Uterus (tissue), 4 donors: ENCODE measurements at regions of chr21 and their contacts with region 1.

Region 1: DNA sequence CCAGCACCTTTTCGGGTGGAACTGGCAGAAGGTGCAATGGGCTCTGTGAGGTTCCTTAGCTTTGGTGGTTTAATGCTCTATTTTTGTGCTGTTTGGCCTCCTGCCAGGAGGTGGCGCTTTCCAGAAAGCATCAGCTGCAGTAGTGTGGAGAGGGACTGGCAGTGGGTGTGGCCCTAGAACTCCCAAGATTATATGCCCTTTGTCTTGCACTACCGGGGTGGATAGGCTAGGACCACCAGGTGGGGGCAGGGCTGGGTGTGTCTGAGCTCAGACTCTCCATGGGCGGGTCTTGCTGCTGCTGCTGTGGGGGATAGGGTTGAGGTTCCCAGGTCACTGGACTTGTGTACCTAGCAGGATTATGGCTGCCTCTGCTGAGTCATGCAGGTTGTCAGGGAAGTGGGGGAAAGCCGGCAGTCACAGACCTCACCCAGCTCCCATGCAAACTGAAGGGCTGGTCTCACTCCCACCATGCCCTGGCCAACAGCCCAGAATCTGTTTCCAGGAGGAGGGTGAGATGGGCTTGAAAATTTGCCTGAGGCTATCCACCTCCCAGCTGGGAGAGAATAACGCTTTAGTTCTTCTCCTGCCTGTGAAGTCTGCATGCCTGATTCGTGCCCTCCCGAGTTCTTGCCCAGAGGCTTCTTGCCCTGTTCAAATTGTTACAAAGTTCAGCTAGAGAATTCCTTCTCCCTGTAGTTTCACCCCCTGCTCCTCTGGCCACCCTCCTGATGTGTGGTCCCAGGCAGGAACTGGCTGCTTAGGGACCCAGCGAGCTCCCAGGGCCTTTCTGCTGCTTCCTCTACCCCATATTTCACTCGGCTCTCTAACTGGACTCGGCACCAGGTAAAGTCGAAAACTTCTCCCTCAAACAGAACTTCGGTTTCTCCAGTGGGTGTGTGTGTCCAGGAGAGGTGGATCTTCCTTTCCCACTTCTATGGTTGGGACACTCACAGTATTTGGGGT is 76.5 kb upstream of the BTG3 start:
- DNase-seq: peak; percentile 85 to 90
- H3K4me3 ChIP-seq: no peak overlapping the region
- H3K27ac ChIP-seq: peak overlapping the region; percentile 79
- H3K4me1 ChIP-seq: no peaks in the 10 kb centered on the region
- H3K27me3 ChIP-seq: no peaks in the 10 kb centered on the region
- CTCF ChIP-seq: no peak
- POLR2A ChIP-seq: no peak

Region 2: DNA sequence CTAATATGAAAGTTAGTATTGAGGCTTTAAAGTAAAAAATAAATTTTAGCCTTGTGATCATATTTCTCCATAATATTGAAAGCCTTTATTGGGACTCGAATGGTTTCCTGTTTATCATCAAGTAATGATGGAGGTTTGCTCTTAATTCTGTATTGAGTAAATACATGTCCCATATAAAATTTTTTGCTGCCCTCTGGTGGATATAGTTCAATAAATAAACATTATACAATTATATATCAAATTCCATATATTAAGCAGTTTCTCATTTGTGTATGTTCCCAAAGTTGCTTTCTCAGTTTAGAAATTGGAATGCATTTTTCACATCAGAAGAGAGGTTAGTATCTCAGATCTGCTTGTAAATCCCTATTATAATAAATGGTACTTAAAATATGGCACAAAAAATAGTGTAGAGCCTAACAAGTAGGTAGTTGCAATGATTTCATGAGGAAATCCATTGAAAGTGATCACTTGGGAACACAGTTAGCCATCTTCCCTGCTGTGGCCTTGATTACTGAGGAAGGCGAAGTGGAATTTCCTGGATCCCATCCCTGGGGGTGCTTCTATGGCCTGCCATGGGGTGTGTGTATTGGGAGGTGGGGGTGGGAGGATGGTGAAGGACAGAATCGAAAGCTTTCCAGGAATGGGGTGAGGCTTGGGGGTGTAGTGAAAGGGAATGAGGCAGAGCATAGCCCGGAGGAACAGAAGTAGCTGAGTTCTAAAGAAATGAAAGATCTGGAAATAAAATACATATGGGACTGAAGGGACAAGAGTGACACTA is 214.0 kb after region 1 on chr21:
- intact Hi-C with region 1: loop called (anchors 10 kb)
- DNase-seq: no peak
- H3K4me3 ChIP-seq: no peak overlapping the region
- H3K27ac ChIP-seq: peak overlapping the region in 1 of 2 donors; percentile 37
- H3K4me1 ChIP-seq: no peaks in the 10 kb centered on the region
- H3K27me3 ChIP-seq: no peaks in the 10 kb centered on the region
- CTCF ChIP-seq: peak in 1 of 4 experiments; percentile 33
- POLR2A ChIP-seq: no peak